Endothelial cell of umbilical vein (primary cell): ENCODE measurements at regions of chr9 and their contacts with region 1.

Region 1: DNA sequence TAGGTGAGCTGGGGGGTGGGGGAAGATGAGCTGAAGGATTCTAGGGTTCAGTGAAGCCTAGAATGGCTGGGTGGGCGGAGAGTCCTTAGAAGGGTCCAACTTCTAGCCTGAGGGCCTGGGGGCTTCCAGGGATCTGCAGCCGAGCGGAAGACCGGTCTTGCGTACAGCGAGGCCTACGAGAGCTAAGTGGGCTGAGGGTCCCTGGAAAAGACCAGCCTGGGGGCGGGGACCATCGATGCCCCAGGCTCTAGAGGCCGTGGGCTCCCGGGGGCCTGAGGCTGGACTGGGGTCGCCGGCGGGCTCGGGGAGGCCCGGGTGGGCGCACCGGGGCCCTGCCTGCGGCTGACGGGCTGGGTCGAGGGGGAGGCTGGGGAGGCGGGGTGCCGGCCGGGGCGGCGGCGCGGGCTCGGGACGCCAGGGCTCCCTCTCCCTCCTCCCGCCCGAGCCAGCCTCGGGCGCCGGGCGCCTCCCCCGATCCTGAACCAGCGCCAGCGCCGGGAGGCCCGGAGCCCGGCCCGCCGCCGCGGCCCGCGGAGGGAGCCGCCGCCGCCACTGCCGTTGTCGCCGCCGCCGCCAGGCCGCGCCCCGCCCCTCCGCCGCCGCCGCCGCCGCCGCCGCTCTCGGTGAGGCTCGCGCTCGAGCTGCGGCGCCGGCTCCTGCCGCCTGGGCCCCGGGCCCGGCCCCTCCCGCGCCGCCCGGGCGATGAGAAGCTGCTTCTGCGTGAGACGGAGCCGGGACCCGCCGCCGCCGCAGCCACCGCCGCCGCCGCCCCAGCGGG is at the start of gene MVB12B:
- DNase-seq: peak; percentile 37
- H3K4me3 ChIP-seq: peak within 1 kb of the TSS in 2 of 3 experiments; percentile 41 to 53
- H3K27ac ChIP-seq: peak within 1 kb of the TSS; percentile 41
- H3K4me1 ChIP-seq: peaks cover 4% of the 10 kb centered on the region
- H3K27me3 ChIP-seq: no peaks in the 10 kb centered on the region
- CTCF ChIP-seq: no peak
- POLR2A ChIP-seq: no peak
- total RNA-seq, gene MVB12B: 13.2 and 17.3 TPM in 2 replicates

Region 2: DNA sequence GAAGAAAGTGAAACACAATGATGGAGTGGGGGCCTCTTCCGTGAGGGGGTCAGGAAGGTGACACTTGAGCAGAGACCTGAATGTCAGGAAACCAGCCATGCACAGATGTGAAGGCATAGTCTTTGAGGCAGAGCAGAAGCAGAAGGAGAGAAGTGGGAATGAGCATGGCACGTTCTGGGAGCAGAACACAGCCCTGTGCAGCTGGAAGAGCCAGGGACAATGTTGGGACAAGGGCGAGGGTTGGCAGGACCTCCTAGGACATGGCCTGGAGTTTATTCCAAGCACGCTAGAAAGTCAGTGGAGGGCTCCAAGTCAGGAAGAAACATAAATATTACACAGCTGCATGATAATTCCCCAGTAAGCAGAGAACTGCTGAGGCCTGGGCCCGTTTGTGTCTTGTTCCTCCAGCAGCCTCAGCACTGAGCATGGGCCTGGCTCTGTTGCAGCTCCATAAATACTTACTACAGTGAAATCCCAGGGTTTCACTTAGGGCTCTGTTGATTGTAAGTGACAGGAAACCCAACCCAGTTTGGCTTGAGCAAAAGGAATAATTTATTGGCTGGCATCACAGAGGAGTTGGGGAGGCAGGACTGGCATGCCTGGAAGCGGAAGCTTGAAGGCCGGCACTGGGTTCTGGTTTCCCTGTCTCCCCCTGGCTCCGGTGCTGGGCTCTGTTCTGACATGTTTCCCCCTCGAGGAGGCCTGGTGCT is 66.4 kb after region 1 on chr9:
- CTCF ChIA-PET with region 1: interaction called, 39 read pairs
- POLR2A ChIA-PET with region 1: no interaction called
- dilution Hi-C with region 1: no loop called
- intact Hi-C with region 1: no loop called
- DNase-seq: no peak
- H3K4me3 ChIP-seq: no peak overlapping the region
- H3K27ac ChIP-seq: no peak overlapping the region
- H3K4me1 ChIP-seq: peaks cover 5% of the 10 kb centered on the region
- H3K27me3 ChIP-seq: no peaks in the 10 kb centered on the region
- CTCF ChIP-seq: no peak
- POLR2A ChIP-seq: no peak